ENCODE measurements at regions of chr7 and their contacts with region 1.

Region 1: DNA sequence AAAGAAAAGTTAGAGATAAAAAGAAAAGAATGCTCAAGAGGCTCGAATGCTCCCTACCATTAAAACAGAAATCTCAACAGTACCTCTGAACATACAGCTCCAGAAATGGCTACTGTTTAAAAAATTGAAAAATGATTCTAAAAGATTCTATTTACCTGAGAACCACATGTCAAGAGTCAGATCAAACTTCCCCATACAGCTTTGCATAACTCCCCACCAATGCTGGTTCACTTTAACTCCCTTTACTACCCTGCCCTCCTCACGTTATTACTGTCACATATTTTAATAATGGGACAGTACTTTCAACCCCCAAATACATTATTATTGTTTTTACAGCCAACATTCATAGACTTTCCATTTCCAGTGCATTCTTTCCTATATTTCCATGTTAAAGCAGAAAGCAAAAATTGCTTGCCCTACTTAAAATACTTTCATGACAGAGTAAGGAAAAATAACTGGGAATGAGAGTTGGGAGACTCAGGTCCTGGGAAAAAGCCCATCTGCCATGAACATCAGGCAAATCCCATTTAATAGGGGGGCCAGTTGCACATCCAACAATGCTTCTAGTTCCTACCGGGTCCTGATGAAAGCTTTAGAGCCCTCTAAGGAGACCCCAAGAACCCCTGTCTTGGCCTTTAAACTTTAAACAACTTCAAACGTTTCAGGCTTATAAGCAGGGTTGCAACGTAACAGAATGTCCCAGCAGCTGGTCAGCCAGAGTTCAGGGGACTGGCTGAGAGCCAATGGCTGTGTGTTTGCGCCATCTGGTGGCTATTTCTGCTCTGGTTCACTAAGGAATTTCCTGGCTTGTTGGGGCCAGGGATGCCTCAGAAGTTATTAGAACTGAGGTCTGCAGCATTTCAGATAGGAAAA is 247.4 kb downstream of the ELMO1 start:
- DNase-seq: peak; percentile 65
- CTCF ChIP-seq: peak; percentile 67

Region 2: DNA sequence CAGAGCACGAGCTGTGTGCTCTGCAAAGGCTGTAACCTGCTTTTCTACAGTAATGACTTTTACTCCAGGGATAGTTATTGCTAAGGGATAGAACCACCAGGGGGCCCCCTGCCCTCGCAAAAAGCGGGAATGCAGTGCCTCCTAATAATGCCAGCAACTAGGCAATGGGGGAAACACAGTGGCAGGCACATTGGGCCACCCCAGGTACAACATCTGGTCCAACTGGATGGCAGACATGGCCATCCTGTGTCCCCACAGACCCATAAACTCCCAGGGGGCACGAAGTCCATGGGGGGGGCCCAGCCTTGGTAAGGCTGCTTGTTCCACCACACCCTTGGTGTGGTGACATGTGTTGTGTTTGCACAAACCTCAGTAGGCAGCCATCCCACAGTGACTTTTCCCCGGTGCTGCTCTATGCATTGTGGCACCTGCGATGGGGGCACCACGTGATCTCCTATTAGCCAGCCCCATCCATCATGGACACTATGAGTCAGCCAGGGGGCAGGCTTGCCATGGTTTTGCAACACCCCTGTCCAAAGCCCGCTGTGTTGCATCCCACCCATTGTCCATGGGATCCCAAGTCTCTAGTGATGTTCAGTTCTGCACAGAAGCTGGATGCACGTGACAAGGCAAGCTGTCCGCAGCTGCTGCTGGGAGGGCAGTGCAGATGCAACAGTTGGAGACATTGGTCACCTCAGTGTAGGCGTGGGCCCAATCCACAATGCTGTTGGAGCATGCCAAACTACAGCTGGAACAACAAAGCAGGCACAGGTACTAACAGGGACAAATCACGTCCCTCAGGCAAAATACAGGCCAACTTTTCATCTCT is 727.6 kb before region 1 on chr7:
- in situ Hi-C with region 1: loop called (anchors 10 kb)
- DNase-seq: no peak
- CTCF ChIP-seq: peak; percentile 22

Region 3: GRCh38 chr7:36670585-36671431 is 530.4 kb before region 1 on chr7:
- in situ Hi-C with region 1: loop called (anchors 25 kb)
- DNase-seq: peak; percentile 72
- CTCF ChIP-seq: peak; percentile 81

Region 4: DNA sequence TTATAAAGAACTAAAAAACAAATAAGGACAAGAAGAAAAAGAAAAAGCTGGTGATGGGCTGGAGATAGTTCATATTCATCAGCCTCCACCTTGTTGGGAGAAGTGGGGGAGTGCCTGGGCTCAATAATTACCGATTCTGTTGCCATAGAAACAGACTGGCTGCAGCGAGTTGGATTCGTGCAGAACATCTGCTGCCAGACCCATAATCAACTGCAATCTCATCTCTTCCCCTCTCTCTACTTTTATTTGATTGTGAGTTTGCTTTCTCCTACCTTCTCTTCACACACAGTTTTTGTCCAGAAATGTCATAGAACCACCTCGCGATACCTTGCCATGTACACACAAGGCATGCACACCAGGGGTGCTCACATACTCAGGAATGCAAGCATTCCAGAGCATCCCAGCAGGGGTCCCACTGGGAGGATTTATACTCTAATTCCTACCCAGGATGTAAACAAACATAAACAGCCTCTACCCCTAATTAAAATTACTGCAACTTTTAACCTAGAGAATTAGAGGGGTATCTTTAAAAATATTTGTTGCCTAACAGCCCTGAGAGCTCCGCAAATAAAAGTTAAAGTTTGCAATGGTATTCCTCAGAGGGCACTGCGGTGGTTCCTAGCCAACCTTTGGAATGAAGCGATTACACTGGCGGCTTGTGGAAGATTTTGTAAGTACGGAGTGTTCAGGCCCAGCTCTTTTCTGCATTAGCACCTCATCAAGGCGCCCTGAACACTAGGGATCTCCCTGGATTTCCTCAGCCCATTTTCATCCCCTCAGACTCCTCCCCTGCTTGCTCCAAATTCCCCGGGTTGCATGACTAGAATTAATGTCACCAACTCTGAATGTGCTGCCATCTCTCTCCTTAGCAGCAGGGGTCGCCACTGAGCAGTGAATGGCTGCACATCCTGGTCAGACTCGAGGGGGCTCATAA is 214.5 kb before region 1 on chr7:
- in situ Hi-C with region 1: loop called (anchors 25 kb)
- DNase-seq: peak; percentile 62
- CTCF ChIP-seq: peak; percentile 85

Region 5: DNA sequence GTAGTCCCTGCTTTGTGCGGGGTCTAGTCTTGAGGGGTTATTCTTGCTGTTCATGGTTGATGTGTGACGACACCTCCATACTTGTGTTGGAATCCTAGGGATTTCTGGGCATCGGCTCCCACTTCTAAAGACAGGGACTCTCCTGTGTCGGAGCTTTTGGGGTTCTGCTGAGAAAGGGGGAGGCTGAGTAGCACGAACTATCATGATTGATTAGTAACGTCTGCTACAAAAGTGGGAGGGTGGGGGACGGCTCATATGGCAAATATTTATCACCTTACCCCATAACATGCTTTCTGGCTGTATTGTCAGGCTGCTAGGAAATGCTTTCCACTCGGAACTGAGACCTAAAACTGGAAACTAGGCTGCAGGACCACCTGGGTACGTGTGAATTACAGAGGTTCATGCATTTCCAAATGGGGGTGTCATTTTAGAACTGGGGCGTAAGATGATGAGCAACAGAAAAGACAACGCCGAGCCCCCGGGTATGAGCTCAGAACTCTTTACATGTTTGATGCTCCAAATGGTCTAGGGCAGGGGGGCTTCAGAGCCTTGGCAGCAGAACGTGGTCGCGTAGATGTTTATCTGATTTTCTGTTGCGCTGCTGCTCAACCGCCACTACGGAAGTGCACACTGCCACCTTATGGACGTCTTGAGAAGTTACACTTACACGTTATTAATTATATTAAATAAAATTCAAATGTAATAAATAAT is 632.0 kb after region 1 on chr7:
- in situ Hi-C with region 1: loop called (anchors 25 kb)
- DNase-seq: peak; percentile 46
- CTCF ChIP-seq: peak; percentile 41